ENCODE measurements at regions of chr1 and their contacts with region 1.

Region 1: DNA sequence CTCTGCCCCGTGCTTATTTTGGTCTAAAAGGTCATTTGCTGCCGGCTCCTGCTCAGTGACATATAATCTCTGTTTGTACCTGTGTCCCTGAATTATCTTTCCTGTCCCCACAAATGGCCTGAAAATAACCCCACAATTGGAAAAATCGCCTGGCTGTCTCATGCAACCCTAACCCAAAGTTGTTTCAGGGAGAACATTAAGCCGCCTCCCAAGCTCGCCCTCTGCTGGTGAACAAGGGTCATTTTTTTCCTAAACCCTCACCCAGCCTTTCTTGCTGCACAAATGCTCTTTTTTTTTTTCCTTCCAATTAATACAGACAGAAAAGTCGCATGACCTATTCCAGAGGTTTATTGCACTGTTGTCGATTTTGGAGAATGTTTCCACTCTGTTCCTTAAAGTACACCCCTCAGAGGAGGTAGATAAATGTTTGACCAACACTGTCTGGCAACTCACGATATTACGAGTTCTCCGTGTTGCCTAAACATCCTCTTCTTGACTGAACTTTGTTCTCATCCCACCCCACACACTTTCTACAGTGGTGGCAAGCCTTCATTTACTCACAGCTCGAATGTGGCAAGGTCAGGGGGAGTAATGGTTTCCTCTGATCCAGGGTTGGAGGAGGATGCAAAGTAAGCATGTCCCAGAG is 148.7 kb downstream of the ZZZ3 start:
- DNase-seq: peak in 3 of 4 donors; percentile 49 to 69 (median 53)
- ATAC-seq: peak; percentile 87
- H3K4me3 ChIP-seq: no peak overlapping the region
- H3K27ac ChIP-seq: peak overlapping the region in 1 of 2 donors; percentile 48
- H3K4me1 ChIP-seq: peaks cover 0 to 16% of the 10 kb centered on the region in 2 donors
- H3K27me3 ChIP-seq: no peaks in the 10 kb centered on the region
- CTCF ChIP-seq: peak; percentile 66 to 67

Region 2: GRCh38 chr1:77168358-77168757 is 365.4 kb before region 1 on chr1:
- intact Hi-C with region 1: loop called in 1 of 2 experiments (anchors 10 kb)
- DNase-seq: no peak
- ATAC-seq: no peak
- H3K4me3 ChIP-seq: no peak overlapping the region
- H3K27ac ChIP-seq: no peak overlapping the region
- H3K4me1 ChIP-seq: no peaks in the 10 kb centered on the region
- H3K27me3 ChIP-seq: no peaks in the 10 kb centered on the region
- CTCF ChIP-seq: no peak

Region 3: DNA sequence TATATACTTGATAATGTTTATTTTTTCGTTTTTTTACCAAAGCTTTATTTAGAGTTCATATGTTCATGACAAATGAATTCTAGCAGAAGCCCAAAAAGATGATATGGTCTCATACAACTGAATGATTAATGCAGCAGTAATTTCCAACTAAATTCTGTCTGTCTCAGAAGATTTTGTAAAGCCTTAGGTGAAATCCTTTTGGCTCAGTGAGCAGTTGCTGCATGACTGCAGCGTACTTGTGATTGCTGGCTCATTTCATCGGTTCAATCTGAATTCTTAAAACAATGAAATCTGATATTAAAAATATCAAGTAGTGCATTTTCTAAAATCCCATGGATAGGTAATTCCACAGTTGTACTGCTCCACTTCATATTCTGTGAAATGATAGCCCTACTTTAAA is 178.8 kb before region 1 on chr1:
- intact Hi-C with region 1: no loop called
- DNase-seq: no peak
- ATAC-seq: no peak
- H3K4me3 ChIP-seq: no peak overlapping the region
- H3K27ac ChIP-seq: no peak overlapping the region
- H3K4me1 ChIP-seq: no peaks in the 10 kb centered on the region
- H3K27me3 ChIP-seq: no peaks in the 10 kb centered on the region
- CTCF ChIP-seq: no peak

Measured in left lung (tissue), 14 donors.